ENCODE measurements at regions of chr12 and their contacts with region 1.

Region 1: DNA sequence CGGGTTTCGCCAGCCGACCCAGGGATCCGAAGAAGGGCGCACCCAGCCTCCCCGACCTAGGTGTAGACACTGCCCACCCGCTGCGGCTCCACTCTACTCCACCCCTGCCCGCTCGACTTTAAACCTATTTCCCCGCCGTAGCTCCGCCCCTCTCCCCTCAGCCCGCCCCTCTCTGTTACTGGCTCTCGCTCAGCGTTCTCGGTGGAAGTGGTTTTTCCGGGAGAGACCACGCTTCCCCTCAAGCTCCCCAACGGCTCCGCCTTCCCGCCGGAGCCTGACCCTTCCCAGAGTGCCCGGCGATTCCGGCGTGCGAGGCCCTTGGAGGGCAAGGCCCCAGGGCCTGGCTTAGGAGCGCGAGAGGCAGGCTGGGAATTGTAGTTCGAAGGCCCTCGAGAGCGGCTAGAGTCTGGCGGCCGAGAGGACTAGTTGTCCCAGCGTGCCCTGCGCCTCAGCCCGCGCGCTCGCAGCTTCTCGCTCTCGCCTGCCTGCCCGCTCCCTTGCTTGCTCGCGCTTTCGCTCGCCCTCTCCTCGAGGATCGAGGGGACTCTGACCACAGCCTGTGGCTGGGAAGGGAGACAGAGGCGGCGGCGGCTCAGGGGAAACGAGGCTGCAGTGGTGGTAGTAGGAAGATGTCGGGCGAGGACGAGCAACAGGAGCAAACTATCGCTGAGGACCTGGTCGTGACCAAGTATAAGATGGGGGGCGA is at the start of gene PA2G4:
- DNase-seq: peak; percentile 98 to 99
- ATAC-seq: peak; percentile 99
- H3K4me3 ChIP-seq: peak within 1 kb of the TSS; percentile 56 to 67
- H3K27ac ChIP-seq: peak within 1 kb of the TSS; percentile 34 to 83
- H3K4me1 ChIP-seq: peaks cover 0 to 9% of the 10 kb centered on the region in 2 donors
- H3K27me3 ChIP-seq: no peaks in the 10 kb centered on the region
- total RNA-seq, gene PA2G4: 59.9 to 63.5 TPM

Region 2: GRCh38 chr12:56007564-56008559 is 96.4 kb before region 1 on chr12:
- intact Hi-C with region 1: loop called in 1 of 2 experiments (anchors 10 kb)
- DNase-seq: peak; percentile 64 to 89
- ATAC-seq: peak; percentile 85
- H3K4me3 ChIP-seq: peak overlapping the region; percentile 78 to 100
- H3K27ac ChIP-seq: peak overlapping the region; percentile 65 to 73
- H3K4me1 ChIP-seq: no peaks in the 10 kb centered on the region
- H3K27me3 ChIP-seq: no peaks in the 10 kb centered on the region

Region 3: GRCh38 chr12:56018356-56018755 is 85.9 kb before region 1 on chr12:
- intact Hi-C with region 1: no loop called
- DNase-seq: no peak
- ATAC-seq: no peak
- H3K4me3 ChIP-seq: no peak overlapping the region
- H3K27ac ChIP-seq: no peak overlapping the region
- H3K4me1 ChIP-seq: no peaks in the 10 kb centered on the region
- H3K27me3 ChIP-seq: no peaks in the 10 kb centered on the region

Region 4: DNA sequence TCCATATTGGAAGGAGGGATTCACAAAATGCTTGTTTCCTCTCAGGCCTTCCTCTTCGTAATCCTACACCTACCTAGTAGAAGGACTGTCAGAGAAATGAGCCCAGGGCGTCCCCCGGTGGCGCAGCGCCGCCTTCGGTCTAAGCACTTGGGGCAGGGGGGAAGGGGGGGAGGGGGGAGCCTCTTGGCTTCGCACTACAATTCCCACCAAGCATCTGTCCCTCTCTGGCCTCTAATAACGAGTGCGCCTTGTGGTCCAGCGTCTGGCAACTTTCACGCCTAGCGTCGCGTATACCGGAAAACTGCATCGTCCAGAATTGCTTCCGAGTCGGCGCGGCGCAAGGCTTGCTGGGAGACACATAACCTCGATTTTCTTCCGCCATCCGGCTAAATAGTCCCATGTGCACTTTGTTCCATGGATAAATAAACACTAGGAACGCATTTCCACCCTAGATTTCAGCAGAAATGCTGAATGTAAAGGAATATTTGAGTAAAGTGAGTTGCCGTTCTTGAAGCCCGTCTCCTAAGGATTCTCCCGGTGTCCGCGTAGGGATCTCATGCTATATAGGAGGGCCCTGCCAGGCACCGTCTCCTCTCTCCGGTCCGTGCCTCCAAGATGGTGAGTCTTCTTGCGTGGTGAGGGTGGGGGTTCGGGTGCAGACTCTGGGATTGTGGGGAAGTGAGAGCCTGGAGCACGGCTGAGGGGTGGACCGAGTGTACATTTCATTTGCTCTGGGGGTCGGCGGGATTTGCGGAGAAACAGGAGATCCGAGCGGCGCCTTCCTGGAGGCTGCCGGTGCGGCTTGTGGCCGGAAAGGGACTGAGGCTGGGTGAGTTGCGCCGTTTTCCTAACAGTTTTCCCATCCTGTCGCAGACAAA is 62.5 kb before region 1 on chr12 and contains the start of gene RPS26:
- intact Hi-C with region 1: loop called in 1 of 2 experiments (anchors 10 kb)
- DNase-seq: peak; percentile 97 to 98
- ATAC-seq: peak; percentile 98
- H3K4me3 ChIP-seq: peak within 1 kb of the TSS; percentile 64 to 75
- H3K27ac ChIP-seq: peak within 1 kb of the TSS; percentile 67 to 69
- H3K4me1 ChIP-seq: peaks cover 2 to 3% of the 10 kb centered on the region in 2 donors
- H3K27me3 ChIP-seq: no peaks in the 10 kb centered on the region
- total RNA-seq, gene RPS26: 40.5 to 69.1 TPM

Region 5: GRCh38 chr12:56078990-56079664 is 25.1 kb before region 1 on chr12:
- intact Hi-C with region 1: loop called in 1 of 2 experiments (anchors 2 kb)
- DNase-seq: peak; percentile 92 to 97
- ATAC-seq: peak; percentile 92
- H3K4me3 ChIP-seq: peak overlapping the region; percentile 10 to 39
- H3K27ac ChIP-seq: peak overlapping the region in 1 of 2 donors; percentile 15
- H3K4me1 ChIP-seq: no peaks in the 10 kb centered on the region
- H3K27me3 ChIP-seq: no peaks in the 10 kb centered on the region